OCI-LY7 (cell line): ENCODE measurements at regions of chr5 and their contacts with region 1.

Region 1: DNA sequence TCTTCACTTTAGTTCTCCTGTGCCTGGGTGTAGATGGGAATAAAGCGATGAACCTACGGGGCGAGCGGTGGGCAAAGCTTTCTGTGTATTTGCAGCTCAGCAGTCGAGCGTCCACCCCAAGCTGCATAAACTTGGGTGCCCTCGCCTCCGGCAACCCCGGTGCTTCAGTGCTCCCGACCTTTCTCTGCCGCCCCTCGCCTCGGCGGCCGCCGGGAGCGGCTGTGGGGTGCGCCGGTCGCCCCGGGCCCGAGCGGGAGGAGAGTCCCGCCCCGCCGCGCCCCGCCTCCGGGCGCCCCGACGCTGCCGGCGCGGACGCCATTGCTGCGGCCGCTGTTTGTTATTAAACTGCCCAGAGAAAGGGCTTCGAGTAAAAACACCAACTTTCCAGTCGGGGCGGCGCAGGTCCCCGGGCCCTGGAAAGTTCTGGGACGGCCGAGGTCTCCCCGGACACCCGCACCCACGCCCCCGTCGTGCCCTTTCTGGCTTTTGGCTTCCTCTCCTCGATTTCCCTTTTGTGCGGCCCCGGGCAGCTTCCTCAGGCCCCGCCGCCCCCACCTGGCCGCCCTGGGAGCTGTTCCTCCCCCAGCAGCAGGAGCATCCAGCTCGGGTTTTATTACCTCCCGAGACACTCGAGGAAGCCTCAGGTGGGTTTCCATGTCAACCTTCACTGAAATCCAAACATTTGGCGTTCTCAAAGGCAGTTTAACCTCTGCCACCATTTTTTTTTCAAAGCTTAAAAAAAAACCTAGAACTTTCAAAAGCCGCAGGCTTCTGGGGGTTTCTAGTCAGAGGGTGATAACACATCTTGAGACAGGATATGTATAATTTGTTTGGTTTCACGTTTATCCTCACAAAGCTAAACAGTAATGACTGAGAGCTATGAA is 334.3 kb downstream of the CWC27 start:
- DNase-seq: peak; percentile 82
- H3K4me3 ChIP-seq: peak overlapping the region; percentile 70
- H3K27ac ChIP-seq: no peak overlapping the region
- H3K4me1 ChIP-seq: peaks cover 39% of the 10 kb centered on the region
- CTCF ChIP-seq: peak; percentile 74

Region 2: GRCh38 chr5:64811050-64811640 is 291.9 kb before region 1 on chr5:
- CTCF ChIA-PET with region 1: no interaction called
- POLR2A ChIA-PET with region 1: no interaction called
- intact Hi-C with region 1: loop called (anchors 10 kb)
- DNase-seq: peak; percentile 65
- H3K4me3 ChIP-seq: no peak overlapping the region
- H3K27ac ChIP-seq: no peak overlapping the region
- H3K4me1 ChIP-seq: no peaks in the 10 kb centered on the region
- CTCF ChIP-seq: peak; percentile 92

Region 3: DNA sequence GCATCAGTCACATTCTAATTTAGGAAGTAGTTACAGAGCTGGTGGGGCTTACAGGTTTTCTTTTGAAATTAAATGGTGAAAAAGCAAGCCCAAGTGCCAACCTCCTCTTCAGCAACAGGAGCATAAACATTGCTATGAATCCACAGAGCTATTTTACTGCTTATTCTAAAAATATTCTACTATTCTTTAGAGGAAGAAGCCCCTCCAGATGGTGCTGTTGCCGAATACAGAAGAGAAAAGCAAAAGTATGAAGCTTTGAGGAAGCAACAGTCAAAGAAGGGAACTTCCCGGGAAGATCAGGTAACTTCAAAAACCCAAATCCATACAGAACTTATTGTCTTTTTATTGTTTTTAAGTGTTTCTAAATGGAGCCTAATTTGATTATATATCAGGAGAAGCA is 131.6 kb before region 1 on chr5:
- CTCF ChIA-PET with region 1: no interaction called
- POLR2A ChIA-PET with region 1: no interaction called
- intact Hi-C with region 1: loop called (anchors 5 kb)
- DNase-seq: peak; percentile 54
- H3K4me3 ChIP-seq: no peak overlapping the region
- H3K27ac ChIP-seq: no peak overlapping the region
- H3K4me1 ChIP-seq: peaks cover 5% of the 10 kb centered on the region
- CTCF ChIP-seq: peak; percentile 75